Caco-2 (cell line): ENCODE measurements at regions of chr2 and their contacts with region 1.

Region 1: GRCh38 chr2:38115216-38116032 is 39.5 kb upstream of the CYP1B1 start:
- DNase-seq: peak; percentile 86 to 90
- H3K4me3 ChIP-seq: no peak overlapping the region
- H3K4me3 Mint-ChIP-seq: no peak overlapping the region
- H3K27ac Mint-ChIP-seq: no peak overlapping the region
- H3K4me1 ChIP-seq: peaks cover 7% of the 10 kb centered on the region
- H3K4me1 Mint-ChIP-seq: peaks cover 6% of the 10 kb centered on the region
- H3K27me3 ChIP-seq: no peaks in the 10 kb centered on the region
- H3K27me3 Mint-ChIP-seq: no peaks in the 10 kb centered on the region
- CTCF ChIP-seq: peak; percentile 97 to 98

Region 2: GRCh38 chr2:37890893-37891495 is 224.4 kb before region 1 on chr2:
- CTCF ChIA-PET with region 1: no interaction called
- POLR2A ChIA-PET with region 1: no interaction called
- intact Hi-C with region 1: loop called (anchors 10 kb)
- DNase-seq: peak; percentile 80 to 84
- H3K4me3 ChIP-seq: no peak overlapping the region
- H3K4me3 Mint-ChIP-seq: no peak overlapping the region
- H3K27ac Mint-ChIP-seq: no peak overlapping the region
- H3K4me1 ChIP-seq: no peaks in the 10 kb centered on the region
- H3K4me1 Mint-ChIP-seq: peaks cover 6% of the 10 kb centered on the region
- H3K27me3 ChIP-seq: no peaks in the 10 kb centered on the region
- H3K27me3 Mint-ChIP-seq: no peaks in the 10 kb centered on the region
- CTCF ChIP-seq: peak; percentile 80 to 81

Region 3: DNA sequence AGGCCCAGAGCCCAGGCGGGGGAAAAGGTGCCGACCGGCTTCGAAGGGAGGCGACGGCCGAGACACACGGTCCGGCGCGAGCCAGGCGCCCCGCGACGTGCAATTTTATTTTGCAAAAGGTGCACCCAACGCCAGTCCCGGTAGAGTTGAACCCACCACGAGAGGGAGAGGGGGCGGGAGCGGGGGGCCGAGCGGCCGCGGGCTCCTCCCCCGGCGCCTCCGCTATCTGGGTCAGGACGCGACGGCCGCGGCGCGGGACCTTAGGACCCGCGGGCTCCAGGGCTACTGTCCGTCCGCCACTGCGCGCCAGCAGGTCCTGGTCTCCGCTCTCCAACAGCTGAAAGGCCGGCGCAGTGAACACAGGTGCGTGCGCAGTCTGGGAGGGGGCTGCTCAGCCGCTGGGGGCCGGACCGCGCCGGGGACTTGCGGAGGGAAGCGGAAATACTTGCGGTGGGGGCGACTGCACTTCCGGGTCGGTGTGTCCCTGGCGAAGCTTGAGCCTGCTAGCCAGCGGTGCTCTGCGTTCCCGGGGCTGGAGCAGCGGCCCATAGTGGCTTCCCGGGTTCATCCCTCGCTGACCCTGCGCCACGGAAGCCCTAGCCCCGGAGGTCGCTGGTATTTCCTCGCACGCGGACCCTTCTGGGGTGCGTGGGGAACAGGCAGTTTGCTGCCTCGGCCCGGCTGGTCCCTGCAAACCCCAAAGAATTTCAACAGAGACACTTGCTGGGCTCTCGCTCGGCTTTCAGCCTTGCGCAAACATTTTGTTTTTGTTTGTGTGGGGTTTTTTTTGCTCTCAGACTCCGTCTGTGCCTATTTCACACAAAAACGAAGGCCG is 190.1 kb before region 1 on chr2 and contains the start of gene RMDN2:
- CTCF ChIA-PET with region 1: no interaction called
- POLR2A ChIA-PET with region 1: no interaction called
- intact Hi-C with region 1: loop called (anchors 10 kb)
- DNase-seq: peak; percentile 98 to 99
- H3K4me3 ChIP-seq: peak within 1 kb of the TSS; percentile 87
- H3K4me3 Mint-ChIP-seq: peak within 1 kb of the TSS; percentile 95
- H3K27ac Mint-ChIP-seq: peak within 1 kb of the TSS; percentile 84
- H3K4me1 ChIP-seq: peaks cover 25% of the 10 kb centered on the region
- H3K4me1 Mint-ChIP-seq: peaks cover 9% of the 10 kb centered on the region
- H3K27me3 ChIP-seq: no peaks in the 10 kb centered on the region
- H3K27me3 Mint-ChIP-seq: no peaks in the 10 kb centered on the region
- CTCF ChIP-seq: no peak
- total RNA-seq, gene RMDN2: 4.3 and 4.4 TPM in 2 replicates

Region 4: DNA sequence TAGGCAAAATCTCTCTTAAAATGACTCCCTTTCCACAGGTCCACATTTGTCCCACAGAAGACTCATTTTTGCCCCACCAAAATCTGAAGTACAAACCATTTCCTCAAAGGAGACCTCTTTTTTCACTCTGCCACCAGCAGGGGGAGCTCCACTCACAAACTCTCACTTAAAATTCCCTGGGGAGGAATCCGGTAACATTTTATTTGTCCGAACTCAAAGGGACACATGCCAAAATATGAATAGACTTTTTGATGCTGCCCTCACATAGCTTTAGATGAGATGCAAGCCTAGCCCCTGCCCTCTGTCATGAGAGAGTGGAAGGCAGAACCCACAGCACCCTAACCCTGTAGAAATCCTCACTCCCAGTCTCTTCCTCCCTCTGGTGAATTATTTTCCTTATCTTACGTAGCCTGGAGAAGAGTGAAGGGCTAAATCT is 133.3 kb before region 1 on chr2:
- CTCF ChIA-PET with region 1: no interaction called
- POLR2A ChIA-PET with region 1: no interaction called
- intact Hi-C with region 1: loop called (anchors 1 kb)
- DNase-seq: peak; percentile 69 to 81
- H3K4me3 ChIP-seq: peak overlapping the region; percentile 16; the same call in 1 of the 2 replicates
- H3K4me3 Mint-ChIP-seq: peak overlapping the region; percentile 2
- H3K27ac Mint-ChIP-seq: no peak overlapping the region
- H3K4me1 ChIP-seq: no peaks in the 10 kb centered on the region
- H3K4me1 Mint-ChIP-seq: peaks cover 12% of the 10 kb centered on the region
- H3K27me3 ChIP-seq: no peaks in the 10 kb centered on the region; the same call in 1 of the 2 replicates
- H3K27me3 Mint-ChIP-seq: no peaks in the 10 kb centered on the region
- CTCF ChIP-seq: peak; percentile 91 to 92

Region 5: DNA sequence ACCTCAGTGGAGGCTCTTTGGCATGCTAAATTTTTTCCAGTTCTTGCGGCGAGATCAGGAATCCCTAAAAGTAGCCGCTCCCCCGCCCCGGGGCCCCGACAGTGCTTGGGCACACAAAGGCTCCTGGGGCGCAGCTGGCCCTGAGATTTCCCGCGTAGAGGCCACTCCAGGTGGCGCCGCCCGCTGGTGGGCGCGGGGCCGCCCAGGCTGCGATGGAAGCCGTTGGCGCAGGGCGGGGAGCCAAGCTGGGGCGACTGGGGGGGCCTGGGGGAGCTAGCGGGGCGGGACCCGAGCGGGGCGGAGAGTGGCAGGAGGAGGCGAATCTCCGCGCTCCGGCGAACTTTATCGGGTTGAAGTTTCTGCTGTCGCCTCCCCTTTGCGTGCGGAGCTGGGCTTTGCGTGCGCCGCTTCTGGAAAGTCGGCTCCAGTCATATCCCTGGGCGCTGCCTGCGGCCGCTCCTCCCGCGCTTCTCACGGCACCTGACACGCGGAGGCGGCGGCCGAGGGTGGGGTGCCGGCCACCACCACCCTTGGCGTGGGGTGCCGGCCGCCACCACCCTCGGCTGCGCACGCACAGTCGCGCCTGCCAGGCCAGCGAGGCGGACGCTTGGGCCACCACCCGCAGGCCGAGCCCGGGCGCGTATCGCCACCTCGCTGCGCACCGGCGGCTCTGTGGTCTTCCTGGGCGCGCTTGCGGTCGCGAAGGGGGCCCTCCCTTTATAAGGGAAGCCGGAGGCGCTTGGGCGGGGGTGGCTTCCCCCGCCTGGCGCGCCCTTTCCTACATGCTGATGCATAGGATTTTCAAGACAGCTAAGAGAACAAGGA is 38.6 kb before region 1 on chr2:
- CTCF ChIA-PET with region 1: interaction called, 16 read pairs
- POLR2A ChIA-PET with region 1: no interaction called
- intact Hi-C with region 1: loop called (anchors 1 kb)
- DNase-seq: peak; percentile 79 to 84
- H3K4me3 ChIP-seq: peak overlapping the region; percentile 56
- H3K4me3 Mint-ChIP-seq: peak overlapping the region; percentile 84
- H3K27ac Mint-ChIP-seq: peak overlapping the region; percentile 76
- H3K4me1 ChIP-seq: peaks cover 24% of the 10 kb centered on the region
- H3K4me1 Mint-ChIP-seq: peaks cover 38% of the 10 kb centered on the region
- H3K27me3 ChIP-seq: no peaks in the 10 kb centered on the region
- H3K27me3 Mint-ChIP-seq: no peaks in the 10 kb centered on the region
- CTCF ChIP-seq: peak; percentile 1 to 53

Region 6: GRCh38 chr2:38095996-38096861 is 19.2 kb before region 1 on chr2:
- CTCF ChIA-PET with region 1: interaction called, 5 read pairs
- POLR2A ChIA-PET with region 1: no interaction called
- intact Hi-C with region 1: loop called (anchors 1 kb)
- DNase-seq: peak; percentile 90 to 92
- H3K4me3 ChIP-seq: no peak overlapping the region
- H3K4me3 Mint-ChIP-seq: peak overlapping the region; percentile 60
- H3K27ac Mint-ChIP-seq: peak overlapping the region; percentile 92
- H3K4me1 ChIP-seq: peaks cover 46% of the 10 kb centered on the region
- H3K4me1 Mint-ChIP-seq: peaks cover 46% of the 10 kb centered on the region
- H3K27me3 ChIP-seq: no peaks in the 10 kb centered on the region
- H3K27me3 Mint-ChIP-seq: no peaks in the 10 kb centered on the region
- CTCF ChIP-seq: no peak

Region 7: DNA sequence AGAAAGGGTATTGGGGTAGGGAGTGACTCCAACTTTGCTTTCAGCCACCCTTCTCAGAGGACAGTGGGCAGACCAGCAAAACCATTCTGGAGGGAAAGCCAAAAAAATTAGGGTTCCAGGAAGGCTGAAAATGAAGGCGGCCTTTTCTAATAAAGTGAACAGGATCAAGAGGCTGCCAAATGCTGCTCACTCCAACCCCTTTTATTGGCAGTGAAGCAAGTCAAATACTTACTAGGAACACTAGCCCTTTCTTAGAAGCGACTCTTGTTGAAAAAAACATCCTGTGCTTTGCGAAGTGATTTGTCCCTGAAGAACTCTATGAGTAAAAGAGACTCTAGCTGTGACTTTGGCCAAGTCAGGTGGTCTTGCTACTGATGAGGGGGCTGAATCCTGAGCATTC is 44.2 kb after region 1 on chr2:
- CTCF ChIA-PET with region 1: no interaction called
- POLR2A ChIA-PET with region 1: no interaction called
- intact Hi-C with region 1: no loop called
- DNase-seq: no peak
- H3K4me3 ChIP-seq: no peak overlapping the region
- H3K4me3 Mint-ChIP-seq: no peak overlapping the region
- H3K27ac Mint-ChIP-seq: no peak overlapping the region
- H3K4me1 ChIP-seq: no peaks in the 10 kb centered on the region
- H3K4me1 Mint-ChIP-seq: peaks cover 7% of the 10 kb centered on the region
- H3K27me3 ChIP-seq: no peaks in the 10 kb centered on the region
- H3K27me3 Mint-ChIP-seq: no peaks in the 10 kb centered on the region
- CTCF ChIP-seq: no peak

Region 8: GRCh38 chr2:38508311-38509039 is 393.1 kb after region 1 on chr2:
- CTCF ChIA-PET with region 1: interaction called, 3 read pairs
- POLR2A ChIA-PET with region 1: no interaction called
- intact Hi-C with region 1: loop called (anchors 1 kb)
- DNase-seq: peak; percentile 88 to 89
- H3K4me3 ChIP-seq: no peak overlapping the region
- H3K4me3 Mint-ChIP-seq: no peak overlapping the region
- H3K27ac Mint-ChIP-seq: no peak overlapping the region
- H3K4me1 ChIP-seq: no peaks in the 10 kb centered on the region
- H3K4me1 Mint-ChIP-seq: no peaks in the 10 kb centered on the region
- H3K27me3 ChIP-seq: no peaks in the 10 kb centered on the region
- H3K27me3 Mint-ChIP-seq: no peaks in the 10 kb centered on the region
- CTCF ChIP-seq: peak; percentile 81 to 93